Activated naive CD8-positive, alpha-beta T cell treated with anti-CD3 and anti-CD28 coated beads, Interleukin-2, amount 10 ng/mL, durations not matched to agents 7 days and 5 days (primary cell): ENCODE measurements at regions of chr1 and their contacts with region 1.

Region 1: GRCh38 chr1:171741872-171742576 is at the start of gene VAMP4:
- DNase-seq: peak; percentile 88
- ATAC-seq: peak; percentile 97
- H3K4me3 Mint-ChIP-seq: peak within 1 kb of the TSS; percentile 100
- H3K27ac Mint-ChIP-seq: peak within 1 kb of the TSS; percentile 97
- H3K4me1 Mint-ChIP-seq: peaks cover 40% of the 10 kb centered on the region
- H3K27me3 Mint-ChIP-seq: no peaks in the 10 kb centered on the region
- total RNA-seq, gene VAMP4: 17.5 to 20.8 TPM

Region 2: DNA sequence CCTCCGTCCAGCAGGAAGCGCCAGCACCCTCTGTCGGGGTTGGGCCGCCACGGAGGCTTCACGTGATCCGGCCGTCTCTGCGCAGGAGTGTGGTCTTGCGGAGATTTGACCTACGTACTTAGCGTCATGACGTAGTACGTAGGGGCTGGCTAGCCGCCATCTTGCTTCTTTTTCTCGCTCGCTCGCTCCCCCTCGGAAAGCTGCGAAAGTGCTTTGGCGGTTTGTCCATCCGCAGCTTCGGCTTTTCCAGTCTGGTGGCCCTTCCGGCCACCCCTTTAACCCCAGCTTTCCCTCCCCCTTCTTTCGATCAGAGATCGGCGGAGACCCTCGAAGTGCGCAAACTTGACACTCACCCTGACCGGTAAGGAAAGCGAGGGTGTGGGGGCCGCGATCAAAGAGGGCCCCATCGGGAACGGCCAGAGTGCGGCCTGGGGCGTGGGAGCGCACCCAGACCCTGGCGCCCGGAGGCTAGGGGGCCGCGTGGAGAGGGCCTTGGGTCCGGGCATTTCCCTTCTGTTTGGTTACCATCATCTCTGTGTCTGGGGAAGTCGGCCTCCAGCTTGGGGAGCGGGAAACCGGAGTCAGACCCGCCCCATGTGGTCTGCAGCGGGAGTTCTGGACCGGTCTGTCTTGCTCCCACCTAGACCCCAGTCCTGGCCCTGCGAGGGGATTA is 256.5 kb before region 1 on chr1 and contains the start of gene PRRC2C:
- POLR2A ChIA-PET with region 1: interaction called, 14 read pairs
- DNase-seq: peak; percentile 87
- ATAC-seq: peak; percentile 84
- H3K4me3 Mint-ChIP-seq: peak within 1 kb of the TSS; percentile 97
- H3K27ac Mint-ChIP-seq: peak within 1 kb of the TSS; percentile 99
- H3K4me1 Mint-ChIP-seq: peaks cover 32% of the 10 kb centered on the region
- H3K27me3 Mint-ChIP-seq: no peaks in the 10 kb centered on the region
- total RNA-seq, gene PRRC2C: 246 to 258 TPM

Region 3: DNA sequence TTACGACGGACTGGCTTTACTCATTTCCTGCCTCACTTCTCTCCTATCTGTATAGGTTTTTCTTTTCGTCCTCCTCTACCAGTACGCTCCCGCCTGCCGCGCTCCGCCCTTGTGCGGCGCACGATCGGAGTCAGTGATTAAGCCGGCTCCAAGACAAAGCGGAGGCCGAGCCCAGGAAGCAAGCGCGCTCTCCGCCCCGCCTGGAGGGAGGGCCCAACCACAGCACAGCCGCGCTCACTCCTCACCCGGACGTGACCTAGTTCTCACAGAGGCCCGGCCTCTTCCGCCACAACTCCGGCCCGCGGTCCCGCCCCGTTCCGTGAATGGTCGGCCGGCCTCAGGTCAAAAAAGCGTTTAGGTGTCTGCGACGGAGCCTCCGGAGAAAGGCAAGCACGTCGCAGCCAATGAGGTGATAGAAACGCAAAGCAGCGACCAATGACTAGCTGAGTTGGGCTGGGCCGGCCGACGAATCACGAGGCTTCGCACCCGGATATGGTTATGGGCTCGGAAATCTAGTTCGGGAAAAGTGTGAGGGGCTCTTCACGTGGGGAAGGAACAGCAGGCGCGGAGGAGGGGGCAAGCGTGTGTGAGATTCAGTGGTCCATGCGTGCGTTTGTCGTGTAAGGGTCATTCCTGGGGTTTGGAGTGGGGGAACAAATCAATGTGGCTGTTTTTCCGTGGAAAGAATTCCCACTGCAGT is 39.3 kb after region 1 on chr1 and contains the start of gene METTL13:
- POLR2A ChIA-PET with region 1: interaction called, 46 read pairs
- DNase-seq: peak; percentile 96
- ATAC-seq: peak; percentile 97
- H3K4me3 Mint-ChIP-seq: peak within 1 kb of the TSS; percentile 100
- H3K27ac Mint-ChIP-seq: peak within 1 kb of the TSS; percentile 97
- H3K4me1 Mint-ChIP-seq: peaks cover 38% of the 10 kb centered on the region
- H3K27me3 Mint-ChIP-seq: peaks cover 2% of the 10 kb centered on the region
- total RNA-seq, gene METTL13: 36.9 to 38.7 TPM

Region 4: GRCh38 chr1:171841050-171841940 is 99.3 kb after region 1 on chr1 and contains the start of gene DNM3:
- POLR2A ChIA-PET with region 1: interaction called, 10 read pairs
- DNase-seq: peak; percentile 92
- ATAC-seq: peak; percentile 94
- H3K4me3 Mint-ChIP-seq: peak within 1 kb of the TSS; percentile 89
- H3K27ac Mint-ChIP-seq: peak within 1 kb of the TSS; percentile 76
- H3K4me1 Mint-ChIP-seq: peaks cover 13% of the 10 kb centered on the region
- H3K27me3 Mint-ChIP-seq: peaks cover 43% of the 10 kb centered on the region
- total RNA-seq, gene DNM3: 2.0 to 2.4 TPM